Right ventricle myocardium superior (tissue), 1 donor: ENCODE measurements at regions of chr5 and their contacts with region 1.

Region 1: GRCh38 chr5:159106569-159107282 is 7.0 kb upstream of the EBF1 start:
- DNase-seq: peak; percentile 91
- ATAC-seq: peak; percentile 93

Region 2: DNA sequence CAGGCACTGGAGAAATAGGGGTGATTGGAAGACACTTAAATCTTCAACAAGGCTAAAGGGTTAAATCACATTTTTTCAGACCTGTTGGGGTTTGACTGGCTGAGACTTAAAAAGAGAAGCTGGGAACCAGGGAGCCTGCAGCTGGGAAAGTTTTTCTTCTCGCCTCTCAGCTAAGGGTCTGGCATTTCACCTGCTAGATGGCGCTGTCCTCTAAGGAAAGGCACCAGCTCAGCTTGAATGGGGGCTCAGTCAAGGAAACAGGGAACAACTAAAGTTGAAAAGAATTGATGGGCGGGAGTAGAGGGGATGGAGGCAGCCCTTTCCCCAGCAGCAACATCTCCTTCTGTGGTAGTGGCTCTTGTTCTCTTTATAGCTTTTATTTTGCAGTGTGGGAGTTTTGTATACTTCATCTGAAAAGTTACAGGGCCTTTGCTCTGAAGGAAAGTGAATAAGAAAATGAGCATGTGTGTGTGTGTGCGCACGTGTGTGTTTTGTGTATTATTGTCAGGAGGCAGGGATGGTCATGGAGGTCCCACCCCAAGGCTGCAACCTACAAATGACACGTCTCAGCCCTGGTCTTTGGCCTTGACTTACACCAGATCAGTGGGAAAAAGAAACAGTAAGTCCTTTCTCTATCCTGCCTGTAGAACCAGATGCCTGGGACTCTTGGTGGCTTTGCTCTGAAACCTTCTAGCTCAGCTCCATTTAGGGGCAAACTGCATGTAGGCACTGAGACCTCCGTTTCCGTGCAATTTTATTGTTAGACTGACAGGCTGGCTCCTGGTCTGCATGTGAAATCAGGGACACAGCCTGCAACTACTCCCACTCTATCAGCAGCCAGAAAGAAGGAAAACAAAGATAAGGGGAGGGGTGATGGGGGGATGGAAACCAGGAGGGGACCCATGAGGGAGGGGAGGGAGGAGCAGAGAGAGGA is 931.5 kb before region 1 on chr5:
- intact Hi-C with region 1: loop called (anchors 5 kb)
- DNase-seq: peak; percentile 68
- ATAC-seq: peak; percentile 94

Region 3: GRCh38 chr5:158695595-158696330 is 411.0 kb before region 1 on chr5:
- intact Hi-C with region 1: loop called (anchors 5 kb)
- DNase-seq: peak; percentile 83
- ATAC-seq: peak; percentile 82